BJ (cell line): ENCODE measurements at regions of chr2 and their contacts with region 1.

Region 1: DNA sequence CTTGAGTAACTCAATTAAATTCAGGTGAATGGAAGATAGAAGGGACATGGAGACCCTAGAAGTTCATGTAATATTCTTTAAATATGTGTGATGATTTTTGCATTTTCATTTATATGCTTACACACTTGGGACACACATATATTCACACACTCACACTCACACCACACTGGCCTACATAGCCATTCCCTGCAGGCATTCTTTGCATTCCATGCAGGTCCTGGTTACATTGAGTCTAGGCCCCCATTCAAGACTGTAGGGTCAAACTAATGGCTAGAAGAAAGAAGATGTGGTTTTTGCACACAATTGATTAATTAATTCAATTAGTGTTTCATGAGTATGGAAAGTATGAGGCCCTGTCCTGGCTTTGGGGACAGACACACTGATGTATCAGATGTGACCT is 249.4 kb downstream of the HNMT start:
- DNase-seq: no peak
- H3K4me3 ChIP-seq: no peak overlapping the region
- H3K27me3 ChIP-seq: no peaks in the 10 kb centered on the region
- CTCF ChIP-seq: no peak

Region 2: GRCh38 chr2:137857566-137858280 is 355.9 kb before region 1 on chr2:
- CTCF ChIA-PET with region 1: no interaction called
- POLR2A ChIA-PET with region 1: interaction called, 17 read pairs
- DNase-seq: no peak
- H3K4me3 ChIP-seq: no peak overlapping the region
- H3K27me3 ChIP-seq: no peaks in the 10 kb centered on the region
- CTCF ChIP-seq: no peak